HEK293T (cell line): ENCODE measurements at regions of chr3 and their contacts with region 1.

Region 1: GRCh38 chr3:190485830-190486532 is 27.9 kb upstream of the IL1RAP start:
- DNase-seq: no peak

Region 2: GRCh38 chr3:190444576-190445145 is 41.3 kb before region 1 on chr3:
- CTCF ChIA-PET with region 1: interaction called, 11 read pairs
- POLR2A ChIA-PET with region 1: no interaction called
- DNase-seq: no peak

Region 3: DNA sequence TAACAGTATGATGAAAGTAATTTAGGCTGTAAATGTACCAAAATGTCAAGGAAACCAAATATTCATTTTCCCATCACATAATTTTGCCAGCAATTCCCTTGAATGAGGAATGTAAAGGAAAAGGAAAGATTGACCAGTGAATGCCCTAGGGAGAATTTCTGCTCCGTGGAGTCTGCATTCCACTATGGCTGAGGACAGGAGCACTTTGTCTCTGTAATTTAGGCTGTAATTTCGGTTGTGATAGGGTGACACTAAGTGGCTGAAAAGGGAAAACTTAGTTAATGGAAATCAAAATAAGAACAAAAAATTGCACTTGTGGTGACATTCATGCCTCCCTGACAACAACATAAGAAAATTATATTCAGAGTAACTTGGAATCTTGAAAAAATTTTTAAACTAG is 27.9 kb before region 1 on chr3:
- CTCF ChIA-PET with region 1: no interaction called
- POLR2A ChIA-PET with region 1: no interaction called
- DNase-seq: no peak